H1 (cell line): ENCODE measurements at regions of chr1 and their contacts with region 1.

Region 1: DNA sequence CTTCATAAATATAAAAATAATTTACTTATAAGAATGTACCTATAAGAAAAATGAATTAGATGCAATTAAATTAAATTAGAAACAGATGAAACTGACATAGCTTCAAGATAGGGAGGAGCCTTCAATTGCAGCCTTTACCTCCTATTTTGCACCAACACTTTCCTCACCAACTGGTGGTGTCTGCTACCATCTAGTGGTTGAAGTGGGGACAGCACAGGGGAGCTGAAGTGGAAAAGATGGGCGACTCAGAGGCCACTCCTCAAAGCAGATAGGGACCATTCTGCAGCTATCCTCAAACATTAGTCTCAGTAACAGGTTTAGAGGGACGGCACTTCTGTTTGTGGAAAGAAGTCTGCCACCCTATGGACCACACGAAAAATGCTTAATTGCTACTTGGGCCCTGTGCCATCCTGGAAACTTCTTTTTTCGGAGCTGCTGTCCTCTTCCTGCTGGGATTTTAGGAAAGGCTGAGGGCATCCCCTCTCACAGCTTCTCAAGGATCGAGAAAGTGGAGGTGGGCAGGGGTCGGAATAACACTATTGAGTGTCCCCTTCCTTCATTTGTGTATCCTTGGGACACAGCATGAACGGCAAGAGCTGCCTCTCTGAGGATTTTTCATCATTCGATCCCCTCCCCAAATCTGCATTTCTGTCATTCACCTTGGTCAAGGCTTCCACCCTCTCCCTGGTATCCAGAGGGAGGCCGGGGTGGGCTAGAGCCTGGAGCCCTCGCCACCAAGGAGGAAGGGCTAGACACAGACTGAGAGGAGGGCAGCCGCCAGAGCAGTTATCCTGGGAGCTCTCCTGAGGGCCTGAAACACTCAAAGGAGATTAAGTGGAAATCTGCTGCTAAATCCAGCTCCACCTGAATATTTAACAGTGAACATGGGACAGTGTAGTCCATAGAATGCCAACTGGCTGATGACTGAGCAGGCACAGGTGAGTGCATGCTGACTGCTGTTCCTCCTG is 9.6 kb downstream of the PROK1 start:
- DNase-seq: peak in 1 of 2 experiments; percentile 93
- H3K4me3 ChIP-seq: no peak overlapping the region
- H3K27ac ChIP-seq: no peak overlapping the region
- H3K4me1 ChIP-seq: no peaks in the 10 kb centered on the region
- H3K27me3 ChIP-seq: no peaks in the 10 kb centered on the region
- CTCF ChIP-seq: peak; percentile 87 to 97 (median 95)
- EP300 ChIP-seq: no peak
- POLR2A ChIP-seq: no peak
- RAD21 ChIP-seq: peak; percentile 100

Region 2: DNA sequence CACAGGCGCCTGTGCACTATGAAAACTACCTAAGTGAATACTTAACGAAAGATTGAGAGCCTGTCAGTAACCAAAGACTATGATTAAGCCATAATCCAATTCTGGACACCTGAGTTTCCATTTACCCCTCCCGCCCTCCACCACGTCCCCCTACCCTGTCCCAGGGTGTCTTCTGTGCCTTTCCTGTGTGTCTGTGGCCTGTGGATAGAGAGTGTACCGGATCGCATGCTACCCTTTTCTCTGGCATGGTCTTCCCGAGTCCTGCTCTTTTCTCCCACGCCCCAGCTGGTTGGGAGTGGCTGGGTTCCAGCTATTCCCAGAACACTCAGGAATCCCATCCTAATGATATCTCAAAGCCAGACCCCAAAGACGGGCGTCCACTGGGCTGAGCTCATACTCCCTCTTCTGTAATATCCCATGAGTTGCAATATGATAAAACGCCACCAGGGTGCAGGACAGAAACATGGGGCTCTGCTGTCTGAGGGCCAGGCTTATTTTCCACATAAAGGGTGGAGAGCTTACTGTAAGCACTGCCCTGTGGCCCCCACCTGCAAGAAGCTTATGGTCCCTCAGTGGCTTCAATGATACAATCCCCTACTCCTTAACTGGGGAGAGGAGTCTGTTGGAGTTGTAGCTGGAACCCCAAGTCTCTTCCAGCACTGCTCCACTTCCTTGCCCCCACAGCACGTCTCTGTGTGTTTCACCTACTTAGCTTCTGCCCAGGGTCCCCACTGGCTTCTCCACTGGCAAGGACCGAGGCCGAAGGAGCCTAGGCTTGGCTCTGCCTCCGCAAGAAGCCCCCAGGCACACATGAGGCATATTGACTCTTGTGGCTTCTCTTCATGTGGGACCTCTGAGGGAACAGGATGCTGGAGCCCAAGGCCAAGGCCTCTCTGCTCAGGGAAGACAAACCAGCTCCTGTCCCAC is 372.5 kb before region 1 on chr1:
- CTCF ChIA-PET with region 1: interaction called, 12 read pairs
- POLR2A ChIA-PET with region 1: no interaction called
- DNase-seq: peak in 1 of 2 experiments; percentile 78
- H3K4me3 ChIP-seq: no peak overlapping the region
- H3K27ac ChIP-seq: no peak overlapping the region
- H3K4me1 ChIP-seq: peaks cover 0 to 22% (median 9%) of the 10 kb centered on the region in 4 experiments; a peak in 6 of 7 replicates
- H3K27me3 ChIP-seq: peaks cover 39 to 55% (median 47%) of the 10 kb centered on the region in 4 experiments
- CTCF ChIP-seq: peak; percentile 52 to 74 (median 73)
- EP300 ChIP-seq: no peak
- POLR2A ChIP-seq: no peak
- RAD21 ChIP-seq: peak; percentile 56 to 71

Region 3: DNA sequence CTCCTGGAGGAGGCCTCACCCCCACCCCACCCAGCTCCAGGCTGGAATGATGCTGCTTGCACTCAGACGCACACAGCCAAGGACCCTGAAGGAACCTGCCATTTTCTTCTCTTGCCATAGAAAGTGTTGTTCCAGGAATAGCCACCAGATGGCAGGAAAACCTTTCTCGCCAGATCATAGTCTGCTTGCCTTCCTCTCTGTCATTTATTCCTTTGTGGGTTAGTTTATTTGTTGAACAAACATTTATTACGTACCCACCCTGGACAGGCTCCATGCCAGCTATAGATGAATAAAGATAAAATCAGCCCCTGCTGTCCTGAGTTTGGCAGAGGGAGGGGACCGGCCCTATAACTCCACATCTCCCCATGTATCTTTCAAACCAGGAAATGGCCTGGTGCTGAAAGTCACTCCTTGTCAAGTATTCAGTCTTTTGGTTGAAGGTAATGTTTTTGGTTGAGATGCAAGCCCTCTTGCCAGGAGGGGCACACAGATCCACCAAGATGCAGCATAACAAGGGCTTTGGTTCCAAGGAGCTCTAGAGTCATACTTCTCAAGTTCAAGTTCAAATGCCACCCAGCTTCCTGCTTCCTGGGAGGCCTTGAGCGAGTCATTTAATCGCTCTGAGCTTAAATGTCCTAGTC is 257.4 kb before region 1 on chr1:
- CTCF ChIA-PET with region 1: interaction called, 230 read pairs
- POLR2A ChIA-PET with region 1: interaction called, 5 read pairs
- DNase-seq: peak in 1 of 2 experiments; percentile 81
- H3K4me3 ChIP-seq: no peak overlapping the region
- H3K27ac ChIP-seq: no peak overlapping the region
- H3K4me1 ChIP-seq: peaks cover 2 to 6% (median 4%) of the 10 kb centered on the region in 4 experiments; a peak in 5 of 7 replicates
- H3K27me3 ChIP-seq: no peaks in the 10 kb centered on the region
- CTCF ChIP-seq: peak; percentile 17 to 86 (median 76)
- EP300 ChIP-seq: no peak
- POLR2A ChIP-seq: no peak
- RAD21 ChIP-seq: peak; percentile 88 to 90

Region 4: DNA sequence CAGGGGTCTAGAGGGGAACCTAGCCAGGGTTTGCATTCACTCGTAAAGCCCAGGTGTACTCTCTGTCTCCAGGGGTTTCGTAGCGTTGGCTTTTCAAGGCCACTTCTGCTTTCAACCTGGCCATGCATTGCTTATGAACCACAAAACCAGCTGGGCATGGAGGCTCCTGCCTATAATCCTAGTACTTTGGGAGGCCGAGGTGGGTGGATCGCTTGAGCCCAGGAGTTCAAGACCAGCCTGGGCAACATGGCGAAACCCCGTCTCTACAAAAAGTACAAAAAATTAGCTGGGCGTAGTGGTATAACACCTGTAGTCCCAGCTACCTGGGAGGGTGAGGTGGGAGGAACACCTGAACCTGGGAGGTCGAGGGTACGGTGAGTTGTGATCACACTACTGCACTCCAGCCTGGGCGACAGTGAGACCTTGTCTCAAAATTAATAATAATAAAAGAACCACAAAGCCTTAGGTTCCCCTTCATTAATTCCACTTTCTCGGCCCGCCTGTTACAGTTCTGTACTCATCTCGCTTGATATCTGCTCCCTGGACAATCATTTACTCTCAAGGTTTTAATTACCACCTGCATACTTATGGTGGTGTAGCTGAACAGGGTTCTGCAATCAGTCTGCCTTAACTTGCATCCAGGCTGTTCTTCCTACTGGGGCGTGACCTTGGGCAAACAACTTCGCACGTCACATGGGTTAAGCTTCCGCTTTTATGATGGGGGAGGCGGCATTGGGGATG is 75.8 kb before region 1 on chr1:
- CTCF ChIA-PET with region 1: interaction called, 12 read pairs
- POLR2A ChIA-PET with region 1: no interaction called
- DNase-seq: no peak
- H3K4me3 ChIP-seq: no peak overlapping the region
- H3K27ac ChIP-seq: no peak overlapping the region
- H3K4me1 ChIP-seq: no peaks in the 10 kb centered on the region
- H3K27me3 ChIP-seq: no peaks in the 10 kb centered on the region
- CTCF ChIP-seq: no peak
- EP300 ChIP-seq: no peak
- POLR2A ChIP-seq: no peak
- RAD21 ChIP-seq: no peak

Region 5: GRCh38 chr1:110433803-110434202 is 26.7 kb before region 1 on chr1:
- CTCF ChIA-PET with region 1: interaction called, 465 read pairs
- POLR2A ChIA-PET with region 1: interaction called, 3 read pairs
- DNase-seq: peak; percentile 38 to 66
- H3K4me3 ChIP-seq: no peak overlapping the region
- H3K27ac ChIP-seq: no peak overlapping the region
- H3K4me1 ChIP-seq: peaks cover 3 to 9% (median 7%) of the 10 kb centered on the region in 4 experiments; a peak in 6 of 7 replicates
- H3K27me3 ChIP-seq: no peaks in the 10 kb centered on the region
- CTCF ChIP-seq: no peak
- EP300 ChIP-seq: no peak
- POLR2A ChIP-seq: no peak
- RAD21 ChIP-seq: peak in 1 of 2 experiments; percentile 25; a peak in 1 of 4 replicates

Region 6: DNA sequence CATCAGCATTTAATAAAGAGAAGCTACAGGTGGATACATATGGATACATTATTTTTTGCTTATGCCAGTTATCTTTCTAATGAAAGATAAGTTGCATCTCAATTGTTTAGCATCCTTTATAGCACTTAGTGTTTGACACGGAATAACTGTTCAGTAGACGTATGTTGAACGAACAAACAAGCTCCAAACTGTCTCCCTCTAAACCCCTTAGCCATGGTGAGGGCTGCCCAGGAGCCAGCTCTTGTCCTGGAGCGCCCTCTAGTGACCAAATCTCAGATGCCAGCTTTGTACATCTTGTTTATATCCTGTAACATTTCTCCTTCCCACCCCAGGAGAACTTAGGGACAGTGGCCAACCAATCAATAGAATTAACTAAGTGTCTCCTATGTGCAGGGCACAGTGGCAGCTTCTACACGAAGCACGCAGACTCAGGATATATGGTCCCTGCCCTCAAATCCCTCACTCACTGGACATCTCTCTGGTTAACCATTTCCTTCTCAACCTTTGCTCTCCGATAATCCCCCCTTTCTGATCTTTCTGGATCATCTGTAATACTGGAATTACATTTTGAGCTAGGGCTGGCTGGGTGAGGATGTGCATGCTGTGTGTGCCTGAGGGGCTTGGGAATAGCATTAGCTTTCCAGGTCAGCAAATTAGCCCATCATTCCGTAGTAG is 35.5 kb after region 1 on chr1:
- CTCF ChIA-PET with region 1: interaction called, 243 read pairs
- POLR2A ChIA-PET with region 1: interaction called, 3 read pairs
- DNase-seq: peak; percentile 58 to 91
- H3K4me3 ChIP-seq: no peak overlapping the region
- H3K27ac ChIP-seq: no peak overlapping the region
- H3K4me1 ChIP-seq: peaks cover 6 to 11% (median 8%) of the 10 kb centered on the region in 4 experiments; a peak in 6 of 7 replicates
- H3K27me3 ChIP-seq: no peaks in the 10 kb centered on the region
- CTCF ChIP-seq: peak; percentile 62 to 95 (median 93)
- EP300 ChIP-seq: no peak
- POLR2A ChIP-seq: no peak
- RAD21 ChIP-seq: peak; percentile 99 to 100

Region 7: GRCh38 chr1:110542725-110543124 is 82.2 kb after region 1 on chr1:
- CTCF ChIA-PET with region 1: no interaction called
- POLR2A ChIA-PET with region 1: no interaction called
- DNase-seq: no peak
- H3K4me3 ChIP-seq: no peak overlapping the region
- H3K27ac ChIP-seq: no peak overlapping the region
- H3K4me1 ChIP-seq: no peaks in the 10 kb centered on the region
- H3K27me3 ChIP-seq: peaks cover 0 to 2% (median under 1%) of the 10 kb centered on the region in 4 experiments; a peak in 1 of 7 replicates
- CTCF ChIP-seq: no peak
- EP300 ChIP-seq: no peak
- POLR2A ChIP-seq: no peak
- RAD21 ChIP-seq: no peak

Region 8: DNA sequence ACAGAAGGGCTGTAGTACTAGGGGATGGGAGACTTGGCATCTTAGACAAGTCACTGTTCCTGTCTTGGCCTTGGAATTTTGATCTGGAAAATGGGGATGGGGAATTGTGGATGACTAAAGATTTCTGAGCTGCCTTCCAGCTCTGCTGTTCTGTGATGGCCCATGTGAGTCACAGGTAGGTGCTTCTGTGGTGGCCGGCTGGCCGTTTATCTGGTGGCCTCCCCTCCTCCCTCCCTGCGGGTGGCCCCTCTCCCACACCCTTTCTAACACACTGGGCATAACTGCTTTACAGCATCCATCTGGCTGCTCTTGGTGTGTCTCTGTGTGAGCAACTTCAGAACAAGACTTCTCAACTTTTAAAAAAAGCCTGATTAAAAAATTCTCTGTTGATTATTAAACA is 109.8 kb after region 1 on chr1:
- CTCF ChIA-PET with region 1: no interaction called
- POLR2A ChIA-PET with region 1: no interaction called
- DNase-seq: no peak
- H3K4me3 ChIP-seq: no peak overlapping the region
- H3K27ac ChIP-seq: no peak overlapping the region
- H3K4me1 ChIP-seq: peaks cover 0 to 4% (median 0%) of the 10 kb centered on the region in 4 experiments; a peak in 1 of 7 replicates
- H3K27me3 ChIP-seq: peaks cover 14 to 28% (median 19%) of the 10 kb centered on the region in 4 experiments
- CTCF ChIP-seq: no peak
- EP300 ChIP-seq: no peak
- POLR2A ChIP-seq: no peak
- RAD21 ChIP-seq: no peak